Motor neuron (in vitro differentiated cells): ENCODE measurements at regions of chrX and their contacts with region 1.

Region 1: DNA sequence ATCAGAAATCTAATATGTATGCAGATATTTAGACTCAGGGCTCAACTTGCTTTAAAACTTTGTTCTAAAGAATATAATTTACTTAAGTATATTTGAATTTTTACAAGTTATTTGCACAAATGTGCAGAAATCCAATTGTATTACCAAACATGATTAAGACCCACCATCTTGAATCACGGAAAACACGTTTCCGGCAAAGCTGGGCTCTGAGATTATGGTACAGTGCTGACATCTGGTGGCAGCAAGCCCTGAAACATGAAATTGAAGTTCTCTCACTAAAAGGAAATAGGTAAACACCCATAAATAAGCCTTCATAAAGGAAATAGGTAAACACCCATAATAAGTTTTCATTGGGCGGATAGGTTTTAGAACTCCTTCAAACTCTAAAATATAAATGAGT is 98.3 kb upstream of the MAOA start:
- ATAC-seq: no peak
- H3K4me3 ChIP-seq: no peak overlapping the region
- H3K27ac ChIP-seq: no peak overlapping the region
- H3K4me1 ChIP-seq: peaks cover 0 to 3% of the 10 kb centered on the region in 2 donors

Region 2: DNA sequence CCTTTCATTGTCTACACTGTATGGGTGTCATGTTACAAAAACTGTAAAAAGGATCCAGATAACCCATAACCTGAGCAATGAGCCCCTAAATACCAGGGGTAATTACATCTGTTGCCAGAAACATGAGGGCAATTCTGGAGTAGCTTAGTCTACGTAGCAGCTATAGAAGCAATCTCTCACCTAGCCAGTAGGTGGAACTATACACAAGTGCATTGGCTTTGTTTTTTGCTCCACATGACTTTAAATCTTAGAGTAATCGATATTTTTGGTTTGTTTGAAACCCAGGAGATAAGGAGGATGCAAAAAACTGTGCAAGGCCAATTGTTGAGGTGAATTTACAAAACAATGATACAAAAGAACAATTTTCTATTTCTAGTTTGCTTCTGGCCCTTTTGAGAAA is 1776.3 kb before region 1 on chrX:
- in situ Hi-C with region 1: loop called in 1 of 9 experiments (anchors 25 kb)
- ATAC-seq: peak in 3 of 8 experiments; percentile 29 to 34 (median 29)
- H3K4me3 ChIP-seq: no peak overlapping the region
- H3K27ac ChIP-seq: no peak overlapping the region
- H3K4me1 ChIP-seq: no peaks in the 10 kb centered on the region

Region 3: GRCh38 chrX:43349363-43349762 is 208.4 kb before region 1 on chrX:
- in situ Hi-C with region 1: loop called in 2 of 9 experiments (anchors 25 kb)
- ATAC-seq: peak in 3 of 8 experiments; percentile 29 to 59 (median 57)
- H3K4me3 ChIP-seq: no peak overlapping the region
- H3K27ac ChIP-seq: no peak overlapping the region
- H3K4me1 ChIP-seq: no peaks in the 10 kb centered on the region

Region 4: DNA sequence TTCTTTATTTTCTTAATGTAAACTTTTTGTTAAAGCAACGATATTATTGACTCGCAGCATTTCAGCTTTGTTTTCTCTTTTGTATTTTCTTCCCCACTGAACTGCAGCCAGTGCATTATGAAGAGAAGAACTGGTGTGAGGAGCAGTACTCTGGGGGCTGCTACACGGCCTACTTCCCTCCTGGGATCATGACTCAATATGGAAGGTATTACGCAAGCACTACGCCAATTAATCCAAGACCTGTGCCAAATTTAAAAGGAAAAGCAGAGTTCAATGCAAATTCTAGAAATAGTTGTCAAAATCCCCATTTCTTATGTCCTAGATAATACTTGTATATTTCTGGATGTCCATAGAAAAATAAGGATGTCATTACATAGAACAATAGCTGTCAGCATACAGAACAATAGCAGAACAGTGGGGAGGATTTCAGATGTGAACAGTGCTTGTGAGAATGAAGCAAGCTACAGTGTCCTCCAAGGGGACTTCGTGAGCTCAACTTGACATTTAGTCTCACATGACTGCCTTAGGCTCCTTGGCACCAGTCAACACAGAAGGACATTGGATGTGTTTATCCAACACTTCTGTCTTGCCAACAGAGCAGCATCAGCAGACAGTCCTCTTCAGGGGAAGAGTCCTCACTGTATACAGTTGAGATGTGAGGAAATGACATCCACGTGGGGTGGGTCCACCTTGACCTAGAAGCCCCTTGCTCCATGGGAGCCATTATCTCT is 184.2 kb after region 1 on chrX:
- in situ Hi-C with region 1: loop called in 1 of 9 experiments (anchors 25 kb)
- ATAC-seq: no peak
- H3K4me3 ChIP-seq: no peak overlapping the region
- H3K27ac ChIP-seq: no peak overlapping the region
- H3K4me1 ChIP-seq: no peaks in the 10 kb centered on the region

Region 5: GRCh38 chrX:43750248-43750676 is 192.5 kb after region 1 on chrX:
- in situ Hi-C with region 1: loop called in 4 of 9 experiments (anchors 25 kb)
- ATAC-seq: peak; percentile 57 to 74 (median 69)
- H3K4me3 ChIP-seq: no peak overlapping the region
- H3K27ac ChIP-seq: no peak overlapping the region
- H3K4me1 ChIP-seq: no peaks in the 10 kb centered on the region

Region 6: GRCh38 chrX:44953734-44954502 is 1396.1 kb after region 1 on chrX:
- in situ Hi-C with region 1: no loop called
- ATAC-seq: no peak
- H3K4me3 ChIP-seq: no peak overlapping the region
- H3K27ac ChIP-seq: no peak overlapping the region
- H3K4me1 ChIP-seq: no peaks in the 10 kb centered on the region